ENCODE measurements at regions of chr13 and their contacts with region 1.

Region 1: GRCh38 chr13:35388441-35389355 is 87.8 kb downstream of the MAB21L1 start:
- DNase-seq: peak; percentile 87
- H3K4me3 ChIP-seq: peak overlapping the region in 1 of 3 experiments; percentile 15
- H3K27ac ChIP-seq: peak overlapping the region; percentile 26
- H3K4me1 ChIP-seq: peaks cover 31% of the 10 kb centered on the region
- H3K27me3 ChIP-seq: no peaks in the 10 kb centered on the region
- CTCF ChIP-seq: no peak
- POLR2A ChIP-seq: no peak

Region 2: GRCh38 chr13:35356572-35356971 is 32.1 kb before region 1 on chr13:
- CTCF ChIA-PET with region 1: no interaction called
- POLR2A ChIA-PET with region 1: no interaction called
- dilution Hi-C with region 1: no loop called
- intact Hi-C with region 1: loop called (anchors 2 kb)
- DNase-seq: peak; percentile 80
- H3K4me3 ChIP-seq: no peak overlapping the region
- H3K27ac ChIP-seq: no peak overlapping the region
- H3K4me1 ChIP-seq: peaks cover 5% of the 10 kb centered on the region
- H3K27me3 ChIP-seq: no peaks in the 10 kb centered on the region
- CTCF ChIP-seq: no peak
- POLR2A ChIP-seq: no peak

Region 3: DNA sequence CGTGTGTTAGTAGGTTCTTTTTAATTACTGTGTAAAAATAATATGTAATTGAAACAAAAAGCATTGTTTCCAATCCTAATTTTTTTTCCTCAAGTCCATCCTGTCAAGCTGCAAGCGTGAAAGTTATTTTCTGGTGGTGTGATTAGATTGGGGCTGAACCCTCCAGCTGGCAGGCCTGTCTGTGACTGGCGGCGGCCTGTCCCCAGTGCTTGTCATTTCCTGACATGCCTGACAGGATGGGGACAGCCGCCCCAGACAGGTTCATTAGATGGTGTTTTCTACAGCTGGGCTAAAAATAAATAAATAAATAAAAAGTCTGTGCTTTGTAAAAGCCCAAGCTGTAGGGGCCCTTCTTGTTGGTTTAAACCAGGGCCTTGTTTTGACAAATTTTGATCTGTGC is 141.4 kb after region 1 on chr13:
- CTCF ChIA-PET with region 1: no interaction called
- POLR2A ChIA-PET with region 1: no interaction called
- dilution Hi-C with region 1: no loop called
- intact Hi-C with region 1: no loop called
- DNase-seq: no peak
- H3K4me3 ChIP-seq: no peak overlapping the region
- H3K27ac ChIP-seq: no peak overlapping the region
- H3K4me1 ChIP-seq: no peaks in the 10 kb centered on the region
- H3K27me3 ChIP-seq: no peaks in the 10 kb centered on the region
- CTCF ChIP-seq: no peak
- POLR2A ChIP-seq: no peak

Region 4: DNA sequence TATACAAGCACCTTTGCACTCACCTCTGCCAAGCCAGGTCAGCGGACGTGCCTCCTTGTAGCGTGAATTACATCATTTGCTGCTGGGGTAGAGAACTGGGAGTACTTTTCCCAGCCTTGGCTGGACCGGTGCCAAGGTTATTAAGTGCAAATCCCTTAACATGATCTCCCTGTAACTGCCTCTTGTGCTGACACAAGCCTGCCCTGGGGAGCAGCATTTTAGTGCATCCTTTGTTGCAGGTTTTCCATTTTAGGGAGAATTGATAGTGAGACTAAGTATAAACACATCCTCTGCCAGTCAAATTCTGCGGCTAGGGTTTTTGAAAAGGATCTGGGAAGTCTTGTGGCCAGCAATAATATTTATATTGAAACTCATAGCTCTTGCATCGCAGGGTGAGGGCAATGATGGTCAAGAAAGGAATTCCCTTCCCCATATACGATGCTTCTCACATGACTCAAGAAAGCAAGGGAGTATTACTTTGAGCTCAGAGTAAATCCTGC is 775.2 kb after region 1 on chr13:
- CTCF ChIA-PET with region 1: no interaction called
- POLR2A ChIA-PET with region 1: no interaction called
- dilution Hi-C with region 1: no loop called
- intact Hi-C with region 1: no loop called
- DNase-seq: no peak
- H3K4me3 ChIP-seq: no peak overlapping the region
- H3K27ac ChIP-seq: no peak overlapping the region
- H3K4me1 ChIP-seq: no peaks in the 10 kb centered on the region
- H3K27me3 ChIP-seq: no peaks in the 10 kb centered on the region
- CTCF ChIP-seq: no peak
- POLR2A ChIP-seq: no peak

Measured in endothelial cell of umbilical vein (primary cell).